HEK293 (cell line): ENCODE measurements at regions of chr2 and their contacts with region 1.

Region 1: GRCh38 chr2:152717228-152718075 is at the start of gene PRPF40A:
- H3K4me3 ChIP-seq: peak within 1 kb of the TSS; percentile 100
- H3K27ac ChIP-seq: peak within 1 kb of the TSS; percentile 89
- H3K4me1 ChIP-seq: 0 out of 2 replicates have a peak, but pooled peaks cover 5% of the 10 kb centered on the region
- CTCF ChIP-seq: no peak; the same call in 1 of the 2 replicates

Region 2: GRCh38 chr2:152175458-152176325 is 541.8 kb before region 1 on chr2 and contains the start of gene STAM2:
- CTCF ChIA-PET with region 1: interaction called, 3 read pairs
- POLR2A ChIA-PET with region 1: interaction called, 14 read pairs
- H3K4me3 ChIP-seq: peak within 1 kb of the TSS; percentile 74
- H3K27ac ChIP-seq: peak within 1 kb of the TSS; percentile 89
- H3K4me1 ChIP-seq: peaks cover 3% of the 10 kb centered on the region; the same call in 1 of the 2 replicates
- CTCF ChIP-seq: peak; percentile 97

Region 3: GRCh38 chr2:152428800-152429582 is 288.5 kb before region 1 on chr2:
- CTCF ChIA-PET with region 1: no interaction called
- POLR2A ChIA-PET with region 1: no interaction called
- H3K4me3 ChIP-seq: no peak overlapping the region
- H3K27ac ChIP-seq: no peak overlapping the region
- H3K4me1 ChIP-seq: peaks cover 17% of the 10 kb centered on the region; the same call in 1 of the 2 replicates
- CTCF ChIP-seq: no peak

Region 4: GRCh38 chr2:152696476-152696875 is 21.0 kb before region 1 on chr2:
- CTCF ChIA-PET with region 1: interaction called, 11 read pairs
- POLR2A ChIA-PET with region 1: interaction called, 4 read pairs
- H3K4me3 ChIP-seq: no peak overlapping the region
- H3K27ac ChIP-seq: no peak overlapping the region
- H3K4me1 ChIP-seq: peaks cover 3% of the 10 kb centered on the region; the same call in 1 of the 2 replicates
- CTCF ChIP-seq: no peak

Region 5: DNA sequence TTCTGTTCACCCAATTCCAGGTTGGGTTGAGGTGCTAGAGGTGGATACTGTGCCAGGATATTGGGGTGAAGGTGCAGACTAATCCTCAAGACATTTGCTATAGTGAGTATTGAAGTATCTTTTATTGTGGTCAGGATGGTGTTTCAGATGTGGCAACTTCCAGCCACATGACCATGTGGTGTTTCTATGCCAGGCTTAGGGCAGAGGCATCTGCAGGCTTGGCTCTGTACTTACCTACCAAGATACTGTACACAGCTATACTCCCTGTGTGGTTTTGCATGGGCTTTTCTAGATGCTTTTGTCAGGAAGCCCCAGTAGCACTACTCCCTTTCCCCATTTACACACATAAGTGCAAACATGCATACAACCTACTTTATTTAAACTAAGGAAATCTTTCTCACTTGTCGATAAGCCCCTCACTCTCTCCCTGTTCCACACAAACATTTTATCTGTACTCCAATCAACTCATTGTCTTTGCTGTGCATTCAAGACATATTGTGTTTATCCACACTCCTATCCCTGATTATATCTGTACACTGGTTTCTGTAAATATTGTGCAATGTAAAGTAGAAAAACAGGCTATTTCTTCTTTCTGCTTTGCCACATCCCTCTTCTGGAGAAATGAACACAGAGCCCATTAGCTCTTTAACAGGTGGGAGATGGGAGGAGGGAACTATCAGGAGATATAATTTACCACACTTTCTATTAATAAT is 13.3 kb after region 1 on chr2:
- CTCF ChIA-PET with region 1: interaction called, 4 read pairs
- POLR2A ChIA-PET with region 1: interaction called, 16 read pairs
- H3K4me3 ChIP-seq: no peak overlapping the region
- H3K27ac ChIP-seq: no peak overlapping the region
- H3K4me1 ChIP-seq: no peaks in the 10 kb centered on the region
- CTCF ChIP-seq: no peak

Region 6: DNA sequence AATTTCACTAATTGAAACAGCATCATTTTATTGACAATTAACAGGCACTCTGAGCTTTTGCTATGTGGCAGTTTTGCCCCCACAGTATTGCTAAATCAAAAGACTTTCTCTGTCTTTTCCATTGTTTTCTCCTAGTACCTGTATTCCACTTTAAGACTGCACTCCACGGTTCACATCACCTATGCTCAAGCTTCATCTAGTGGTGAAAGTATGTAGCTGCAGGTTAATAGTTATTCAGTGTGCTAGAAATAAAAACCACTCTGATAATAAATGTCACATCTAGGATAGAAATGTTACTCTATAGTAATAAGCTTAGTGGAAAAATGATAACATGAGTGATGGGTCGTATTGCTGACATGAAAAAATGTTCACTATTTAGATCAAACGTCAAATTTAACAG is 25.6 kb after region 1 on chr2:
- CTCF ChIA-PET with region 1: interaction called, 14 read pairs
- POLR2A ChIA-PET with region 1: no interaction called
- H3K4me3 ChIP-seq: no peak overlapping the region
- H3K27ac ChIP-seq: no peak overlapping the region
- H3K4me1 ChIP-seq: no peaks in the 10 kb centered on the region
- CTCF ChIP-seq: no peak